ENCODE measurements at regions of chr5 and their contacts with region 1.

Region 1: GRCh38 chr5:56415356-56415765 is 182.2 kb upstream of the ANKRD55 start:
- DNase-seq: peak; percentile 48
- ATAC-seq: peak; percentile 71
- H3K4me3 Mint-ChIP-seq: peak overlapping the region; percentile 78
- H3K27ac Mint-ChIP-seq: peak overlapping the region; percentile 99
- H3K4me1 Mint-ChIP-seq: peaks cover 82% of the 10 kb centered on the region
- H3K27me3 Mint-ChIP-seq: no peaks in the 10 kb centered on the region
- CTCF ChIP-seq: no peak

Region 2: GRCh38 chr5:56328753-56329560 is 86.4 kb before region 1 on chr5:
- CTCF ChIA-PET with region 1: no interaction called
- POLR2A ChIA-PET with region 1: interaction called, 6 read pairs
- intact Hi-C with region 1: loop called (anchors 2 kb)
- DNase-seq: no peak
- ATAC-seq: peak; percentile 80
- H3K4me3 Mint-ChIP-seq: peak overlapping the region; percentile 52
- H3K27ac Mint-ChIP-seq: peak overlapping the region; percentile 89
- H3K4me1 Mint-ChIP-seq: peaks cover 59% of the 10 kb centered on the region
- H3K27me3 Mint-ChIP-seq: no peaks in the 10 kb centered on the region
- CTCF ChIP-seq: no peak

Region 3: GRCh38 chr5:56565644-56566043 is 150.3 kb after region 1 on chr5:
- CTCF ChIA-PET with region 1: interaction called, 3 read pairs
- POLR2A ChIA-PET with region 1: interaction called, 3 read pairs
- intact Hi-C with region 1: loop called (anchors 1 kb)
- DNase-seq: peak; percentile 32
- ATAC-seq: peak; percentile 97
- H3K4me3 Mint-ChIP-seq: peak overlapping the region; percentile 49
- H3K27ac Mint-ChIP-seq: peak overlapping the region; percentile 33
- H3K4me1 Mint-ChIP-seq: peaks cover 48% of the 10 kb centered on the region
- H3K27me3 Mint-ChIP-seq: no peaks in the 10 kb centered on the region
- CTCF ChIP-seq: no peak

Region 4: DNA sequence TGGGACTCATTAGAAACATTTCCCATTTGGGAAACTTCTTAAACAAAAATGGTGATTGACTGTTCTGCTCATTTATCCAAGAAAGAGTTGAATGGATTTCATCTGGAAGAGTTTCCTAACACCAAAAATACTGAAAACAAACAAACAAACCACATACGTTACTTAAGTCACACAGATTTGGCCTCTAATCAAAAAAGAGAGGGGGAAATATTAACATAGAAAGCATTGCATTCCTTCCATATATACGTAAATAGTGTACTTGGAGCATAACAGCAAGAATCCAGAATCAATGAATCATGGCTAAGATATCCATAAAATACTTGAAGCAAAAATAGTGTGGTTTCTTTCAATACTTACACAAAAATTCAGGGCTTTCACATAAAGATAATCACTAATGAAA is 210.2 kb after region 1 on chr5:
- CTCF ChIA-PET with region 1: no interaction called
- POLR2A ChIA-PET with region 1: no interaction called
- intact Hi-C with region 1: no loop called
- DNase-seq: no peak
- ATAC-seq: no peak
- H3K4me3 Mint-ChIP-seq: no peak overlapping the region
- H3K27ac Mint-ChIP-seq: no peak overlapping the region
- H3K4me1 Mint-ChIP-seq: no peaks in the 10 kb centered on the region
- H3K27me3 Mint-ChIP-seq: no peaks in the 10 kb centered on the region
- CTCF ChIP-seq: no peak

Region 5: GRCh38 chr5:56686337-56687195 is 271.2 kb after region 1 on chr5:
- CTCF ChIA-PET with region 1: no interaction called
- POLR2A ChIA-PET with region 1: interaction called, 5 read pairs
- intact Hi-C with region 1: loop called (anchors 5 kb)
- DNase-seq: peak; percentile 31
- ATAC-seq: peak; percentile 72
- H3K4me3 Mint-ChIP-seq: peak overlapping the region; percentile 62
- H3K27ac Mint-ChIP-seq: peak overlapping the region; percentile 88
- H3K4me1 Mint-ChIP-seq: peaks cover 98% of the 10 kb centered on the region
- H3K27me3 Mint-ChIP-seq: no peaks in the 10 kb centered on the region
- CTCF ChIP-seq: no peak